PC-3 (cell line): ENCODE measurements at regions of chr11 and their contacts with region 1.

Region 1: GRCh38 chr11:61392981-61393595 is 701 bp downstream of the TMEM216 start:
- DNase-seq: peak; percentile 53
- ATAC-seq: peak; percentile 45
- H3K4me3 ChIP-seq: peak overlapping the region; percentile 94
- H3K27ac ChIP-seq: peak overlapping the region; percentile 59
- H3K4me1 ChIP-seq: peaks cover 14% of the 10 kb centered on the region
- H3K27me3 ChIP-seq: no peaks in the 10 kb centered on the region
- CTCF ChIP-seq: peak; percentile 59

Region 2: GRCh38 chr11:61254403-61255025 is 138.6 kb before region 1 on chr11:
- CTCF ChIA-PET with region 1: interaction called, 11 read pairs
- POLR2A ChIA-PET with region 1: no interaction called
- intact Hi-C with region 1: no loop called
- DNase-seq: peak; percentile 79
- ATAC-seq: peak; percentile 97
- H3K4me3 ChIP-seq: no peak overlapping the region
- H3K27ac ChIP-seq: no peak overlapping the region
- H3K4me1 ChIP-seq: no peaks in the 10 kb centered on the region
- H3K27me3 ChIP-seq: peaks cover 14% of the 10 kb centered on the region
- CTCF ChIP-seq: peak; percentile 91